ENCODE measurements at regions of chr2 and their contacts with region 1.

Region 1: GRCh38 chr2:27211829-27212627 is at the starts of genes ATRAID and SLC5A6:
- DNase-seq: peak; percentile 92
- H3K4me3 ChIP-seq: peak within 1 kb of the TSS; percentile 68 to 91 (median 88)
- H3K27ac ChIP-seq: peak within 1 kb of the TSS; percentile 89
- H3K4me1 ChIP-seq: peaks cover 17% of the 10 kb centered on the region
- H3K27me3 ChIP-seq: no peaks in the 10 kb centered on the region
- CTCF ChIP-seq: no peak
- POLR2A ChIP-seq: peak; percentile 98
- total RNA-seq, gene ATRAID: 84.3 and 86.6 TPM in 2 replicates
- total RNA-seq, gene SLC5A6: 42.7 and 52.0 TPM in 2 replicates

Region 2: DNA sequence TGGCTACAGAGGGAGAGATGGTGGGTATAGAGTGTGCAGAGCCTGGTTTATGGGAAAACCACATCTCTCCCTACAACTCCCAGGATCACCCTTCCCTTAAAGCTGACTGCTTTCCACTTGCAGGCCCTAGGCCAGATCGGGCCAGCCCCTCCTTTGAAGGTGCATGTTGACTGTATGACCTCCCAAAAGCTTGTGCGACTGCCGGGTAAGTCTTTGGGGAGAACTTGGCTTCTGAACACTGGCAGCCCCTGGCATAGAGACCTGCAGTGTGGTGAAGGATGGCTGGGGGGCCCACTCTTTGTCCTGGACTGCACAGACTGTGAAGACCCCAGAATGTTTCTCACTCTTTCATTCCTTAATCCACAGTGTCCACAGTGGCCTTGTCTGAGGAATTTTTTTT is 24.6 kb after region 1 on chr2:
- CTCF ChIA-PET with region 1: no interaction called
- POLR2A ChIA-PET with region 1: no interaction called
- dilution Hi-C with region 1: no loop called
- intact Hi-C with region 1: no loop called
- DNase-seq: no peak
- H3K4me3 ChIP-seq: no peak overlapping the region
- H3K27ac ChIP-seq: no peak overlapping the region
- H3K4me1 ChIP-seq: no peaks in the 10 kb centered on the region
- H3K27me3 ChIP-seq: no peaks in the 10 kb centered on the region
- CTCF ChIP-seq: no peak
- POLR2A ChIP-seq: no peak

Region 3: GRCh38 chr2:27322766-27323595 is 111.0 kb after region 1 on chr2 and contains the start of gene MPV17:
- CTCF ChIA-PET with region 1: no interaction called
- POLR2A ChIA-PET with region 1: no interaction called
- dilution Hi-C with region 1: no loop called
- intact Hi-C with region 1: loop called (anchors 1 kb)
- DNase-seq: peak; percentile 90
- H3K4me3 ChIP-seq: peak within 1 kb of the TSS; percentile 70 to 91 (median 90)
- H3K27ac ChIP-seq: peak within 1 kb of the TSS; percentile 95
- H3K4me1 ChIP-seq: peaks cover 26% of the 10 kb centered on the region
- H3K27me3 ChIP-seq: no peaks in the 10 kb centered on the region
- CTCF ChIP-seq: no peak
- POLR2A ChIP-seq: peak; percentile 98
- total RNA-seq, gene MPV17: 66.5 and 74.7 TPM in 2 replicates

Region 4: DNA sequence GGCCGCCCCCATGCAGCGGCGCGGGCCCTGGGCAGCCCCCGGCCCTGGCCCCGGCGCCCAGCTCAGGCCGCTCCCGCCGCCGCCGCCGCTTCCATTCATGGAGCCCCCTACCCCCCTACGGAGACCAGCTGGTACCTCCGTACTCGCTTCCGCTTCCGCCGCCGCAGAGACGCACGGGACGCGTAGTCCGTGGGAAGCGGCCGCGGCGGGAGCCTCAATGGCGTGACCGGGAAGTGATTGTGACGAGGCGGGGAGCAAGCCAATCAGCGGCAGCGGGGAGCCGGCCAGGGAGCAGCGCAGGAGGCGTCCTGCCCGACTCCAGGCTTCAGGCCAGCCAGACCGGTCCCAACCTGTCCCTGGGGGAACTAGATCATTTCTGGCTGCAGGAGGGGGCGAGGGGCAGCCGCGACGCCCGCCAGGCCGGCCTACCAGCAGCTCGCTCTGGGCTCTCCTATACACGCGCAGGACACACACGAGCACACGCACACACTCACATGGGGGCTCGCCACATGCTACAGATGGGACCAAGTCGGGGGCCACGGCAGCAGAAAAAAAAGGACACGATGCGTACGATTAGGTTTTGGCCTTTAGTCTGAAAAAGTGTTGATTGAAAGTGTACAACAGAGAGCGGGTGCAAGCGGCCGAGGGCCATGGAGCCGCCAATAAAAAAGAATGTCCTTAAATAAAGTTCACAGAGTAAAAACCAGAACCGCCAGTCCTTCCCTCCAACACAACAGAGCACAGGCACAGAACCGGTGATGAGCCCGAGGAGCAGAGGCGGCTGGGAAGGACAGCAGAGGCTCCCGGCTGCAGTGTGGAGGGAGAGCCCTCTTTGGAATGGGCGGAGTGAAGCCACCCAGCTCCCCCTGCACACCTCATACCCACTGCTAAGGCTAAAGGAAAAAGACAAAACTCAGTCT is 168.9 kb after region 1 on chr2 and contains the start of gene ZNF513:
- CTCF ChIA-PET with region 1: no interaction called
- POLR2A ChIA-PET with region 1: no interaction called
- dilution Hi-C with region 1: no loop called
- intact Hi-C with region 1: loop called (anchors 1 kb)
- DNase-seq: peak; percentile 95
- H3K4me3 ChIP-seq: peak within 1 kb of the TSS; percentile 75 to 85 (median 77)
- H3K27ac ChIP-seq: peak within 1 kb of the TSS; percentile 97
- H3K4me1 ChIP-seq: peaks cover 17% of the 10 kb centered on the region
- H3K27me3 ChIP-seq: no peaks in the 10 kb centered on the region
- CTCF ChIP-seq: no peak
- POLR2A ChIP-seq: no peak
- total RNA-seq, gene ZNF513: 19.0 and 20.7 TPM in 2 replicates

Region 5: GRCh38 chr2:27509326-27509725 is 297.3 kb after region 1 on chr2:
- CTCF ChIA-PET with region 1: no interaction called
- POLR2A ChIA-PET with region 1: no interaction called
- dilution Hi-C with region 1: no loop called
- intact Hi-C with region 1: no loop called
- DNase-seq: no peak
- H3K4me3 ChIP-seq: no peak overlapping the region
- H3K27ac ChIP-seq: no peak overlapping the region
- H3K4me1 ChIP-seq: no peaks in the 10 kb centered on the region
- H3K27me3 ChIP-seq: no peaks in the 10 kb centered on the region
- CTCF ChIP-seq: no peak
- POLR2A ChIP-seq: no peak

Measured in endothelial cell of umbilical vein (primary cell).